ENCODE measurements at regions of chr6 and their contacts with region 1.

Region 1: DNA sequence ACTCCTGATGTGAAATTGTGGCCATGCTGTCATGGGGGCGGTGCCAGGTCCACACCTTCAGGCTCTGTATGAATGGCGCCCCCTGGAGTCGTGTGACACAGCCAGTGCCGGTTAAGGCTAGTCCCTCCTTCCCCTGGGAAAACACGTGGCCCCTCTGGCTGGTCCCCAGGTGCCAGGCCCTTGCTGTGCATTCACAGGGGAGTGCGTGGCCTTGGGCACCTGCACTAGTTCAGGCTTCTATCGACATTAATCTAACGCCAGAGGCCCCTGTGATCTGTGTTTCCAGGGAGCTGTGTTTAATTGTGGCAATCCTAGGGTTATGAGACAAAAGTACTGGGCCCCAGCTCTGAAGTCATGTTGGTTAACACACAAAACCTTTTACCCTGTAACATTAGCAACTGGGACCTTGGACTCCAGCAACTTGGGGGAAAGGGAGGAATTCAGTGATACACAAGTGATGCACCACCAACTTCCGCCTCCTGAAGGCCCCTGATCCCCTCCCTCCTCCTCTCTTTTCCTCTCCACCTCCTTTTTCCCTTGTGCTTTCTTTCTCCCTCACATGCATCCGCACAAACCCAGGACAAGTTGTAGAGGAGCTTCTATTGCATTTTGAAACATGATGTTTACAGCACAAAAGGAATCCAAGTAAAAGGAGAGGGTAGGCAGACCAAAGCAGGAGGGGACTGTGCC is 74.0 kb downstream of the SSR1 start:
- DNase-seq: peak; percentile 92

Region 2: DNA sequence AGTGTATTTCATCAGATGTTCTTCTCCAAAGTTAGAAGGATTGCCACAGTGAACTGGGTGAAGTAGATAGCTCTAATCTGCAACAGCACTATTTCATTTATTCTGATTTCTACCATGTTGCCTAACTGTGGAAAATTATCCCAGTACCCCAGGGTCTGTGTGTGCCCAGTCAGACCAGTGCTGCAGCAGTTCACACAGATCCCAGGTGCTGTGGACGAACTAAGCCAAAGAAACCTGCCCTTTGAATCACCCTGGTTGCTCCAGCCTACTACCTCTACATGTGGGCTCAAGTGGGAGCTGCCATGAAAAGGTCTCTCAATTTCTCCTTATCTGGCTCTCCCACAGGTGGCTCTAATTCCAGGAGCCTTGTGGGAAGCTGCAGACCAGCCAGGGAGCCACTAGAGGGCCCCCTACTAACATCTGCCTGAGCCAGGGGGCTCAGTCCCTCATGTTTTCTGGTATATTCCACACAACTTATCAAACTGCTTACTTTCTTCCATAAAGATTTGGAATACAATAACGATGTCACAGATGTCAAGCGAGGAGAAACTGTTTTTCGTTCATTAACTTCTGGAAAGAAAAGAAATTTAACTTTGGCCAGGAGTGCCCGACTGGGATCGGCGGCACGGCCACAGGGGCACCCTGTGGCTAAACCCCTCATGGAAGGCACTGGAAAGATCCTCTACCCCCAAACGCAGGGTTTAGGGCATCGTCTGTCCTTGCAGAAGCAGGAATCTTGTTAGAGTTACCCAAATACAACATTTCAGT is 682.1 kb before region 1 on chr6:
- intact Hi-C with region 1: loop called (anchors 5 kb)
- DNase-seq: no peak

Region 3: DNA sequence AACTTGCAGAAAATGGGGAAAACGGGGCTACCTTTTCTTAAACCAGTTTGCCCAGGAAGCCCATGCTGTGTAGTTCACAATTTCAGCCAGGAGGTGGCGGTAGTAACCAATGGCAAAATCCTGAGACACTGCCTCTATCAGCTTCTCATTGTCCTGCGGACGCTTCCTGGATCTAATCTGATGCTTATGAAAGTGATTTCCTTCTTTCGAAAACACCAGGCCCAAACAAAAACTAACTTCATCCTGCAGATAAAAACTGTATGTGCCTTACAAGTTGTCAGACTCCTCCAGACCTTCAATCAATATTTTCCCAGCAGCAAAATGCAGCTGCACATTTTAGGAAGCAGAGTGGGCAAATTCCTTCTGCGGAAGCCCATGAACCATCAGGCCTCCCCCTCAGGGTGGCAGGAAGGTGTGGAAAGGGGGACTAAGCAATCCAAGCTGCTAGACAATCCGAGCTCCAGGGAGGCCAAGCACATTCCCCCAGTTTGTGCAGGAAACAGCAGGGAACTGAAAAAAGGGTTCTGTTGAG is 562.1 kb before region 1 on chr6:
- intact Hi-C with region 1: loop called (anchors 5 kb)
- DNase-seq: no peak

Region 4: DNA sequence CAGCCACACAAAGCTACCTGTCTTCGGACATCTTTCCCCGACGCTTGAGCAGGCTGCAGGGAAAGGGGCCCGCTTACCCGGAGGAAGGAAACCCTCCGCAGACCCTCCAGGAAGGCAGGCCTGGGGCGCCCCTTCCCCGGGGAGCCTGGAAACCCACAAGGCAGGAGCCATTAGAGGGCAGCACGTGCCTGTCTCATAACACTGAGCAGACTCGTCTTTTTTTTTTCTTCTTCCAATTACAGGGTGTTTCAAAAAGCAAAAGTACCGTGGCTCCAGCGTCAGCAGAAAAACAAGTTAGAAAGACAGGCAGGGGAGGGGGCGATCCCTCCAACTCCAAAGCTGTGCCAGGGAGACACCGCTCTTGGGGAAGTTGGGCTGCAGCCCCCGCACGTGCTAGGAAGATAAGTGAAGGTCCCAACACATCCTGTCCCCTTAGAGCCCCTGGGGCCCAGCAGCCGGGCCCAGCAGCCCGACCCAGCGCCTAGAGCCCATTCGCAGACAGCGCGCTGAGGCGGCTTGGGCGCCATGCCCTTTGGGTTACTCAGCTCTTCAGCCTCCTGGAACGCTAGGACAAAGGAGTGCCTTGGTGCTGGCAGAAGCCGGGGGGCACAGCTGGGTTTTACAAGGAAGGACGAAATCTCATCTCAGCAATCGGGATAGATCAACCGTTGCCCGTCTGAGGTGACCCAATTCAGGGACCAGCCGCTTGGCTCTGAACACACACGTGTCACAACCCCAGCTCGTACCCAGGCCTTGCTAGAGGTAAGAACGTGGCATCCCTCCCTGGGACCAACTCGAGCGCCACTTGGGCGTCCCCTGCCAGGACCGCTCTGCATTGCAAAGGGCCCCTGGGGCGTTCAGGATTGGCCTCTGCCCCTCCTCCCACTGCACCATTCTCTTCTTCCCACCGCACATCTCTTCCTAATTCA is 514.2 kb before region 1 on chr6:
- intact Hi-C with region 1: loop called (anchors 1 kb)
- DNase-seq: no peak

Region 5: GRCh38 chr6:6927521-6928371 is 311.3 kb before region 1 on chr6:
- intact Hi-C with region 1: loop called (anchors 10 kb)
- DNase-seq: no peak

Region 6: DNA sequence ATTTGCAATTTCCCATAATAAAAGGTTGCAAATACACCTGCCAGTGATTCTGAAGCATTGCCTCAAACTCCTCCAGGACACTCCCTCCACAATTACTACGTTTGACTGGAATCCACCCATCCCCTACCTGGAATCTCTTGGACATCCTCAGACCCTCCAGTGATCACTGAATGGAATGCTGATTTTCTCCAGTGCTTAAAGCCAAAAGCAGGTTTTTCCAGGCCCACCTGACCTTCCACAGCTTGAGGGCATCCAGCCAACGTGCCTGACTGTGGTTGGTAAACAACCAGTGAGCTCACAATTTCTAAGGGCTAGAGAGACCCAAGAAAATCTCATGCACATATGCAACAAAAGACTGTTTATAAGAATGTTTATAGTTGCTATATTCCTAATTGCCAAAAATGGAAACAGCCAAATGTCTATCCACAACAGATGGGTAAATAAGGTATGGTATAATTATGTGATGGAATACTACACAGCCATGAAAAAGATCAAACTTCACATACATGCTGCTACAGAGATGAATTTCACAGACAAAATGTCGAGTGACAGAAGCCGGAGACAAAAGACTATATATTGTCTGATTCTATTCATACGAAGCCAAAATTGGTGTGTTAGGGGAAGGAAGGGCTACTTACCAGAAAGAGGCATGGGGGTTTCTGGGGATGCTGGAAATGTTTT is 278.3 kb before region 1 on chr6:
- intact Hi-C with region 1: no loop called
- DNase-seq: no peak